Colonic mucosa (tissue), 4 donors: ENCODE measurements at regions of chr5 and their contacts with region 1.

Region 1: GRCh38 chr5:79878721-79879336 is 112.2 kb downstream of the MTX3 start:
- DNase-seq: no peak
- H3K4me3 ChIP-seq: no peak overlapping the region
- H3K27ac ChIP-seq: no peak overlapping the region
- H3K4me1 ChIP-seq: no peaks in the 10 kb centered on the region
- H3K27me3 ChIP-seq: no peaks in the 10 kb centered on the region
- CTCF ChIP-seq: no peak

Region 2: GRCh38 chr5:80069918-80070318 is 191.1 kb after region 1 on chr5:
- intact Hi-C with region 1: loop called (anchors 10 kb)
- DNase-seq: peak; percentile 27
- H3K4me3 ChIP-seq: no peak overlapping the region
- H3K27ac ChIP-seq: no peak overlapping the region
- H3K4me1 ChIP-seq: no peaks in the 10 kb centered on the region
- H3K27me3 ChIP-seq: no peaks in the 10 kb centered on the region
- CTCF ChIP-seq: no peak

Region 3: DNA sequence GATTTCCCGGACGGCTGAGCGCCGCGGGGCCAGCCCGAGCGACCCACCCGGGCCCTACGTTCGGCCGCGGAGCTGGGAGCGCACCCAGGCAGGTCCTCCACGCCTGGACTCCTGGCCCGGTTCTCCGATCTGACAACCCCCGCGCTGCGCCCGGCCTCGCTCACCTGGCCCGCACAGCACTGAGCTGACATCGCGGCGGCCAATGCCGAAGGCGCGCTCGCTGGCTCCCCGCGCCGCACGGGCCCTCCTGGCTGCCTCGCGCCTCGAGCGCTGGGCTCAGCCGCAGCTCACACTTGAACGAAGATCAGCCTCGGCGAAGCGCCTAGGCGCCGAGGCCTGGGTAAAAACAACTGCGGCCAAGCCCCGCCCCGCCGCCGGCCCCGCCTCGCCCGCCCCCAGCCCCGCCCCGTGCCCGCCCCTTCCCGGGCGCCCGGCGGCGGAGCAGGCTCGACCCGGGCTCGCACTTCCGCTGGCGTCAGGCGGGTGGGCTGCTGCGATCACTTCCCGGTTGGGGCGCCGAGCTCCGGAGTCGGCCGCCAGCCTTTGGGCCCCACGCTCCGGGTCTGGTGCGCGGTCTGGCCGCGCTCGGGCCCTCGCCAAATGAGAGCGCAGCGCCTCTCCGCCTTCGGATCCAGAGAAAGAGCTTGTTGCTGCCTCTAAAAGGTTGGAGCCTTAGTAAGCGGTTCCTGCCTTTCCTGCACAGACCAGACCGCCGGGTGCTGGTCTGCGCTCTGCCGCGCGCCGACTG is 377.1 kb after region 1 on chr5 and contains the start of gene SERINC5:
- intact Hi-C with region 1: no loop called
- DNase-seq: peak; percentile 90
- H3K4me3 ChIP-seq: peak within 1 kb of the TSS; percentile 92
- H3K27ac ChIP-seq: peak within 1 kb of the TSS; percentile 99
- H3K4me1 ChIP-seq: peaks cover 4% of the 10 kb centered on the region
- H3K27me3 ChIP-seq: no peaks in the 10 kb centered on the region
- CTCF ChIP-seq: no peak
- total RNA-seq, gene SERINC5: 138 to 141 TPM